Activated CD4-positive, alpha-beta memory T cell treated with anti-CD3 and anti-CD28 coated beads for 36 hours (primary cell): ENCODE measurements at regions of chr2 and their contacts with region 1.

Region 1: GRCh38 chr2:97710596-97711386 is 2.6 kb upstream of the ZAP70 start:
- DNase-seq: peak; percentile 43
- H3K4me3 Mint-ChIP-seq: no peak overlapping the region
- H3K27ac Mint-ChIP-seq: peak overlapping the region; percentile 58
- H3K4me1 Mint-ChIP-seq: peaks cover 42% of the 10 kb centered on the region
- H3K27me3 Mint-ChIP-seq: no peaks in the 10 kb centered on the region

Region 2: DNA sequence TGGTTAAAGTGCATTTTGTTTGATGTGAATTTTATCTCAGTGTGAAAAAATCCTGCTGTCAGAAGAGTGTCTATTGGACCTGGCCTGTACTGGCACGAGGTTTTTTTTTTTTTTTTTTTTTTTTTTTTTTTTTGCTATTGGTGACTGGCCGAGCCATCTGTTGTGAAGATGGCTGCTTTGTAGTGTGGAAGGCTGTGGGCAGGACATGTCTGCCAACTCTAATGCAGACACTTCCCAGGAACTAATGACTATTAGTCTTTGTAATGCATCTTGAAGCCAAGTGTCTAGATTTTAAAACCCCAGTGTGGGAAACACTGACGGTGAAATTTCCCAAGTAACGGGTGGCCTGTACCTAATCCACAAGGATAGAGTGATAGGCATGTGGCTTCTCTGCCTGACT is 36.9 kb after region 1 on chr2:
- CTCF ChIA-PET with region 1: interaction called, 33 read pairs
- POLR2A ChIA-PET with region 1: interaction called, 26 read pairs
- intact Hi-C with region 1: loop called (anchors 1 kb)
- DNase-seq: peak; percentile 3
- H3K4me3 Mint-ChIP-seq: no peak overlapping the region
- H3K27ac Mint-ChIP-seq: no peak overlapping the region
- H3K4me1 Mint-ChIP-seq: peaks cover 43% of the 10 kb centered on the region
- H3K27me3 Mint-ChIP-seq: no peaks in the 10 kb centered on the region